MCF 10A (cell line): ENCODE measurements at regions of chr2 and their contacts with region 1.

Region 1: DNA sequence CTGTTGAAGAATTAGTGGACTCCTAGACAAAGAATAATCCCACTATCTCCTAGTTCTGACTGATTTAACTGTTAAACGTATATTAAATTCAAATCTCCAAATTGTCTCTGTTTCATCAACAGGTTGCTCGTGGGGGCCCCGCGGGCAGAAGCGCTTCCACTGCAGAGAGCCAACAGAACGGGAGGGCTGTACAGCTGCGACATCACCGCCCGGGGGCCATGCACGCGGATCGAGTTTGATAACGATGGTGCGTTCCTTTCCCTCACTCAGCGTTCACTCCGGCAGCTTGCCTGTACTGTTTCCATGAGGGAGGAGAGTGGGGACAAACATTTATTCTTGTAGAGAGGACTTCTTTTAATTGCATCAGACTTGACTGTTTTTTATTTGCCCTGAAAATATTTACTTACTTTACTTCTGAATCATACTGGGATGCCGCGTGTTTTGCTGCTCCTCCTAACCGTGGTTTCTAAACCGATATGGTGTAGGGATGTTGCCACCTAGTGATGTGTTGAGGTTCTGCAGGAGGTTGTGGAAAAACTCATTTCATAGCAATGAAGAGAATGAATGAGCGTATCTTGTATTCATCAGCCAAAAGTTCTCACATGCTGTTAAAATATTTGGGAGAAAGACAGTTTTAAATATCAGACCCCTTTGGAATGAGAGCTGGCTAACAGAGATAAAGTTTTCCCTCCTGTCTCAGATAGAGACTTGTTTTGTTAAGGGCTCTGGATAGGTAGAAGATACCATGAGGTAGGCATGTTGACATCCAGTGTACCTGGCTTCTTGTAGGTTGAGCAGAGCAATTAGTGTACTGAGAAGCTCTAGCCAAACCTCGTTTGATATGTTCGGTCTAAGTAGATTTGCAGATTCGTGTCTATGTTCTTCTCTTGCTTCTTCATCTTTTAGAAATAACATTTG is 38.3 kb downstream of the ITGA6 start:
- DNase-seq: peak; percentile 82
- H3K4me3 Mint-ChIP-seq: peak overlapping the region; percentile 38
- H3K27ac Mint-ChIP-seq: peak overlapping the region; percentile 95
- H3K4me1 Mint-ChIP-seq: peaks cover 58% of the 10 kb centered on the region
- H3K27me3 Mint-ChIP-seq: no peaks in the 10 kb centered on the region
- CTCF ChIP-seq: peak; percentile 87

Region 2: GRCh38 chr2:171703574-171704347 is 761.9 kb before region 1 on chr2:
- CTCF ChIA-PET with region 1: interaction called, 4 read pairs
- POLR2A ChIA-PET with region 1: no interaction called
- intact Hi-C with region 1: loop called (anchors 5 kb)
- DNase-seq: peak; percentile 55
- H3K4me3 Mint-ChIP-seq: no peak overlapping the region
- H3K27ac Mint-ChIP-seq: no peak overlapping the region
- H3K4me1 Mint-ChIP-seq: peaks cover 26% of the 10 kb centered on the region
- H3K27me3 Mint-ChIP-seq: no peaks in the 10 kb centered on the region
- CTCF ChIP-seq: peak; percentile 42

Region 3: GRCh38 chr2:172179045-172179701 is 286.5 kb before region 1 on chr2:
- CTCF ChIA-PET with region 1: interaction called, 148 read pairs
- POLR2A ChIA-PET with region 1: interaction called, 34 read pairs
- intact Hi-C with region 1: no loop called
- DNase-seq: peak; percentile 89
- H3K4me3 Mint-ChIP-seq: no peak overlapping the region
- H3K27ac Mint-ChIP-seq: peak overlapping the region; percentile 9
- H3K4me1 Mint-ChIP-seq: peaks cover 28% of the 10 kb centered on the region
- H3K27me3 Mint-ChIP-seq: no peaks in the 10 kb centered on the region
- CTCF ChIP-seq: no peak

Region 4: DNA sequence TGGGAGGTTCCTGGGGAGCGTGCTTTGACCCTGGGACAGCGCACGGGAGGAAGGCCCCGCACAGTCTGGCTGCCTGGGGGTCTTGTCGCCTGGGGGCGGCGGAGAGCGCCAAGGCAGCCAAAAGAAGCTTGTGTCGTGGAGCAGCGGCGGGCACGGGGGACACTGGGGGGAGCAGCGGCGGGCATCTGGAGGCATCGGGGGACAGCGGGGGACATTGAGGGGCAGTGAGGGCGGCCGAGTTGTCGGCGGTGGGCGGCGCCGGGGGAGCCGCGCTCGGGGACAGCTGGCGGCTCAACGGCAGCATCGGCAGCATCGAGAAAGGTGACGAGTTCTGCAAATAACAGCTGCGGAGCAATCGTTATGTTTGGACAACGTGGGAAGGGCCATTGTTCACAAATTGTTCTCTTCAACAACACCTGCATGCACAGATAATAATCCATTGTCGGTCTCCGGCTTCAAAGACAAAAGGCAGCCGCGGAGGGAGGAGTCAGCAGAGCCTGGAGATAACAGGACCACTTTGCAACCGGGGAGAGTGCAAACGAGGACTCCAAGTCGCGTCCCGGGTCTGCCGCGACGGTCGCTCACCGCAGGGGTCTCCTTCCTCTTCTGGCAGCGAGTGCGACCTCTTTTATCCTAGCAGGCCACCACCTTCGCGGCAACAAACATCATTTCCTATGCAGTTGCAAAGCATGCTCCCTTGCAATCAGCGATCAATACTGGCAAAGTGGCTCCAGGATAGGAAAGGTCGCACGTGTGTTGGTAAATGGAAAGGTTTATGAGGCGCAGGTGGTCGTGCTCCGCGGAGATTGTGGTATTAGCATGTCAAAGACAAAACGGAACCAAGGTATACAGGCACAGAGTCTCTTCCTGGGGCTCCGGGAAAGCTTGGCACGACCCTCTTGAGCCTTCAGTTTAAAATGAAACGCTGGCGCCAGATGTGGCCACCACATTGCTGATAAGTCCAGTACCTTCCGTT is 230.7 kb before region 1 on chr2:
- CTCF ChIA-PET with region 1: interaction called, 30 read pairs
- POLR2A ChIA-PET with region 1: interaction called, 124 read pairs
- intact Hi-C with region 1: no loop called
- DNase-seq: no peak
- H3K4me3 Mint-ChIP-seq: no peak overlapping the region
- H3K27ac Mint-ChIP-seq: no peak overlapping the region
- H3K4me1 Mint-ChIP-seq: peaks cover 25% of the 10 kb centered on the region
- H3K27me3 Mint-ChIP-seq: no peaks in the 10 kb centered on the region
- CTCF ChIP-seq: no peak

Region 5: DNA sequence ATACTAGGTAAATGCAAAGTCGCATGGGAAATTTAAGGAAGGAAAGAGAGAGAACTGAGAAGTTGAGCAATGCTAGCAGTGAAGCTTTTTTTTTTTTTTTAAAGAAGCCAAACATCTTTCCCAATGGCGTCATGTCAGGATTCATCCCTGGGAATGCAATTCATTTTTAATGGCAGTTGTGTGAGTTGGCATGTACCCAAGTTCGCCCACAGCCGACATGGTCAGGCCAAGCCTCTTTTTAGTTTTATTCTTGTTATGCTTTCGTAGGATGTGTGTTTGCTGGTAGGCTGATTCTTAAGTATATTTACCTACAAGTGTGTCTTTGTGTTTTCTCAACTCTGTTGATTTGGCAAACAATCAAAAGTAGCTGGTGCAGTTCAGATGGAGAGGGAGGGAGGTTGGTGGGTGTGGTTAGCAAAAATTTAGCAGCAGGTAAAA is 165.9 kb before region 1 on chr2:
- CTCF ChIA-PET with region 1: interaction called, 15 read pairs
- POLR2A ChIA-PET with region 1: interaction called, 8 read pairs
- intact Hi-C with region 1: no loop called
- DNase-seq: peak; percentile 94
- H3K4me3 Mint-ChIP-seq: peak overlapping the region; percentile 61
- H3K27ac Mint-ChIP-seq: peak overlapping the region; percentile 68
- H3K4me1 Mint-ChIP-seq: peaks cover 26% of the 10 kb centered on the region
- H3K27me3 Mint-ChIP-seq: no peaks in the 10 kb centered on the region
- CTCF ChIP-seq: no peak

Region 6: GRCh38 chr2:172449911-172450550 is 15.6 kb before region 1 on chr2:
- CTCF ChIA-PET with region 1: interaction called, 536 read pairs
- POLR2A ChIA-PET with region 1: interaction called, 231 read pairs
- intact Hi-C with region 1: no loop called
- DNase-seq: peak; percentile 55
- H3K4me3 Mint-ChIP-seq: peak overlapping the region; percentile 51
- H3K27ac Mint-ChIP-seq: peak overlapping the region; percentile 4
- H3K4me1 Mint-ChIP-seq: peaks cover 57% of the 10 kb centered on the region
- H3K27me3 Mint-ChIP-seq: no peaks in the 10 kb centered on the region
- CTCF ChIP-seq: no peak

Region 7: GRCh38 chr2:172545408-172546084 is 79.9 kb after region 1 on chr2:
- CTCF ChIA-PET with region 1: no interaction called
- POLR2A ChIA-PET with region 1: no interaction called
- intact Hi-C with region 1: no loop called
- DNase-seq: no peak
- H3K4me3 Mint-ChIP-seq: no peak overlapping the region
- H3K27ac Mint-ChIP-seq: no peak overlapping the region
- H3K4me1 Mint-ChIP-seq: no peaks in the 10 kb centered on the region
- H3K27me3 Mint-ChIP-seq: no peaks in the 10 kb centered on the region
- CTCF ChIP-seq: no peak